OCI-LY7 (cell line): ENCODE measurements at regions of chr17 and their contacts with region 1.

Region 1: DNA sequence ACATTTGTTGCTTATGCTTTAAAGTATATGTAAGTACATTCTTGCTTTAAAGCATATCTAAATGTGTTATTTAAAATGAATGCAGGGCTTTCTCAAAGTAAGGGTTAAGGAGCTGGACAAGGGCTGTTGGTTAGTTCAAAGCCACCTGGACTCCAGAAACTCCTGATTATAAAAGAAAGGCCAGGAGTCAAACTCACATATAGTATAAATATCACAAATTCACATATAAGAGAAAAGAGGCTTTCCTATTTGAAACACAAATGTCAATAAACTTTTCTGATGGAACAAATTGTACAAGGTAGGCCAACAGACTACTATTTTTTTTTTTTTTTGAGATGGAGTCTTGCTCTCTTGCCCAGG is 84.5 kb upstream of the CORO6 start:
- DNase-seq: no peak
- H3K4me3 ChIP-seq: peak overlapping the region; percentile 44
- H3K27ac ChIP-seq: peak overlapping the region; percentile 81
- H3K4me1 ChIP-seq: peaks cover 39% of the 10 kb centered on the region
- CTCF ChIP-seq: no peak

Region 2: GRCh38 chr17:29760761-29761696 is 53.8 kb after region 1 on chr17:
- CTCF ChIA-PET with region 1: no interaction called
- POLR2A ChIA-PET with region 1: interaction called, 4 read pairs
- intact Hi-C with region 1: loop called (anchors 2 kb)
- DNase-seq: peak; percentile 91
- H3K4me3 ChIP-seq: peak overlapping the region; percentile 75
- H3K27ac ChIP-seq: peak overlapping the region; percentile 73
- H3K4me1 ChIP-seq: peaks cover 52% of the 10 kb centered on the region
- CTCF ChIP-seq: no peak